PC-9 (cell line): ENCODE measurements at regions of chr19 and their contacts with region 1.

Region 1: GRCh38 chr19:56403764-56404704 is at the start of gene ZNF583:
- DNase-seq: peak; percentile 74 to 94
- H3K4me3 ChIP-seq: peak within 1 kb of the TSS; percentile 82
- H3K27ac ChIP-seq: no peak within 1 kb of the TSS
- H3K4me1 ChIP-seq: peaks cover 13% of the 10 kb centered on the region
- H3K27me3 ChIP-seq: no peaks in the 10 kb centered on the region
- CTCF ChIP-seq: no peak
- total RNA-seq, gene ZNF583: 2.5 and 3.1 TPM in 2 replicates

Region 2: GRCh38 chr19:56393119-56394012 is 10.7 kb before region 1 on chr19 and contains the start of gene ZNF582:
- CTCF ChIA-PET with region 1: interaction called, 5 read pairs
- POLR2A ChIA-PET with region 1: no interaction called
- intact Hi-C with region 1: loop called (anchors 1 kb)
- DNase-seq: peak; percentile 86 to 89
- H3K4me3 ChIP-seq: peak within 1 kb of the TSS; percentile 70
- H3K27ac ChIP-seq: peak within 1 kb of the TSS; percentile 50
- H3K4me1 ChIP-seq: 0 out of 2 replicates have a peak, but pooled peaks cover 9% of the 10 kb centered on the region
- H3K27me3 ChIP-seq: no peaks in the 10 kb centered on the region
- CTCF ChIP-seq: peak; percentile 89
- total RNA-seq, gene ZNF582: 1.8 and 3.4 TPM in 2 replicates